Cardiac septum (tissue), 1 donor: ENCODE measurements at regions of chr2 and their contacts with region 1.

Region 1: GRCh38 chr2:41698678-41699422 is 349.0 kb upstream of the PKDCC start:
- DNase-seq: no peak

Region 2: GRCh38 chr2:41414486-41415230 is 284.2 kb before region 1 on chr2:
- intact Hi-C with region 1: loop called (anchors 1 kb)
- DNase-seq: no peak